A549 (cell line): ENCODE measurements at regions of chr12 and their contacts with region 1.

Region 1: GRCh38 chr12:114684098-114684869 is at the start of gene TBX3:
- DNase-seq: peak; percentile 97 to 100
- ATAC-seq: peak; percentile 88 to 92
- H3K4me3 ChIP-seq: peak within 1 kb of the TSS; percentile 57
- H3K27ac ChIP-seq: peak within 1 kb of the TSS; percentile 96 to 100
- H3K4me1 ChIP-seq: peaks cover 15% of the 10 kb centered on the region
- CTCF ChIP-seq: peak; percentile 58
- EP300 ChIP-seq: no peak
- POLR2A ChIP-seq: peak; percentile 91
- RAD21 ChIP-seq: peak; percentile 50 to 77
- polyA plus RNA-seq, gene TBX3: 23.7 and 28.0 TPM in 2 replicates

Region 2: GRCh38 chr12:114425031-114425626 is 259.2 kb before region 1 on chr12:
- CTCF ChIA-PET with region 1: no interaction called
- POLR2A ChIA-PET with region 1: no interaction called
- DNase-seq: no peak
- ATAC-seq: no peak; a peak in 1 of 6 replicates
- H3K4me3 ChIP-seq: no peak overlapping the region
- H3K27ac ChIP-seq: no peak overlapping the region
- H3K4me1 ChIP-seq: no peaks in the 10 kb centered on the region
- CTCF ChIP-seq: no peak
- EP300 ChIP-seq: no peak
- POLR2A ChIP-seq: no peak
- RAD21 ChIP-seq: no peak

Region 3: GRCh38 chr12:114588091-114588490 is 96.2 kb before region 1 on chr12:
- CTCF ChIA-PET with region 1: no interaction called
- POLR2A ChIA-PET with region 1: no interaction called
- DNase-seq: no peak
- ATAC-seq: no peak
- H3K4me3 ChIP-seq: no peak overlapping the region
- H3K27ac ChIP-seq: no peak overlapping the region
- H3K4me1 ChIP-seq: no peaks in the 10 kb centered on the region
- CTCF ChIP-seq: no peak
- EP300 ChIP-seq: no peak
- POLR2A ChIP-seq: no peak
- RAD21 ChIP-seq: no peak

Region 4: GRCh38 chr12:114655934-114656749 is 28.1 kb before region 1 on chr12:
- CTCF ChIA-PET with region 1: interaction called, 4 read pairs
- POLR2A ChIA-PET with region 1: interaction called, 14 read pairs
- DNase-seq: peak; percentile 71 to 95
- ATAC-seq: peak; percentile 92 to 94
- H3K4me3 ChIP-seq: no peak overlapping the region
- H3K27ac ChIP-seq: peak overlapping the region; percentile 83 to 85
- H3K4me1 ChIP-seq: peaks cover 38% of the 10 kb centered on the region
- CTCF ChIP-seq: no peak
- EP300 ChIP-seq: peak; percentile 96 to 99
- POLR2A ChIP-seq: no peak
- RAD21 ChIP-seq: peak in 1 of 2 experiments; percentile 37; a peak in 3 of 5 replicates

Region 5: GRCh38 chr12:114694436-114695304 is 10.4 kb after region 1 on chr12:
- CTCF ChIA-PET with region 1: interaction called, 8 read pairs
- POLR2A ChIA-PET with region 1: interaction called, 15 read pairs
- DNase-seq: no peak
- ATAC-seq: no peak; a peak in 1 of 6 replicates
- H3K4me3 ChIP-seq: no peak overlapping the region
- H3K27ac ChIP-seq: no peak overlapping the region
- H3K4me1 ChIP-seq: no peaks in the 10 kb centered on the region
- CTCF ChIP-seq: no peak
- EP300 ChIP-seq: no peak
- POLR2A ChIP-seq: no peak
- RAD21 ChIP-seq: no peak

Region 6: DNA sequence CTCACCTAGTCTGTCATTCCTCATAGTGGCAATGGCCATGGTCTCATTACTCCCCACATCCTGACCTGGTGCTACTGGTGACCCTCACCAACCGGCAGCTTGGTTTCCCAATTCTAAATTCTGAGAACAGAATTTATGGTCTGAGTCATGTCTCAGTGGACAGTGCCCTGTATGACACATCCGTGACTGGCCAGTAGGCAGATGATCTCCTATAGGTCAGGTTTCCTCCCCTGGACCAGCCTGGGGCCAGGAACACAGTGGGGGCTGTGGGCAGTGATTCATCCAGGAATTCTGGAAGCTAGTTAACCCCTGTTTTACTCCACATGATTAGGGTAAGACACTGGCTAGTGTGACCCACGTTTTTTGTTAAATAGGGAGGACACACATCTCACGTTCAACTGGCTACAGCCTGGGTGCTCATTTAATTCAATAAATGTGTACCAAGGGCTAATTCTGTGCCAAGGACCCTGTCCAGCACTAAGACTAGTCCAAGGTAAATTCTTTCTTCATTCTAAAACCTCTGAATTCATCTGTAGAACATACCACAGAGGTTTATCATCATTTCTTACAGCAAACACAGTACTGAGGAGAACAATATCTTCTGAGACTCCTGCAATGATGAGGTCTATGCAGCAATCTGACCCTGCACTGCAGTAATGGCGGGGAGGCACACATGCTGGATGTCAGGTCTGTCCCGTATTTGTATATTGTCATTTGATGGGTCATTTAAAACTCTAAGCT is 249.3 kb after region 1 on chr12:
- CTCF ChIA-PET with region 1: interaction called, 8 read pairs
- POLR2A ChIA-PET with region 1: interaction called, 40 read pairs
- DNase-seq: peak; percentile 90 to 94
- ATAC-seq: peak; percentile 99 to 100
- H3K4me3 ChIP-seq: no peak overlapping the region
- H3K27ac ChIP-seq: peak overlapping the region; percentile 73 to 93
- H3K4me1 ChIP-seq: peaks cover 25% of the 10 kb centered on the region
- CTCF ChIP-seq: no peak
- EP300 ChIP-seq: peak; percentile 85 to 88; a peak in 4 of 5 replicates
- POLR2A ChIP-seq: no peak
- RAD21 ChIP-seq: peak; percentile 36 to 60

Region 7: GRCh38 chr12:115294439-115295133 is 610.3 kb after region 1 on chr12:
- CTCF ChIA-PET with region 1: interaction called, 3 read pairs
- POLR2A ChIA-PET with region 1: interaction called, 21 read pairs
- DNase-seq: peak in 1 of 2 experiments; percentile 84
- ATAC-seq: peak; percentile 67 to 86
- H3K4me3 ChIP-seq: no peak overlapping the region
- H3K27ac ChIP-seq: peak overlapping the region; percentile 56 to 60; a peak in 5 of 6 replicates
- H3K4me1 ChIP-seq: peaks cover 31% of the 10 kb centered on the region
- CTCF ChIP-seq: no peak
- EP300 ChIP-seq: peak; percentile 14 to 44; a peak in 1 of 5 replicates
- POLR2A ChIP-seq: no peak
- RAD21 ChIP-seq: peak in 1 of 2 experiments; percentile 14; a peak in 1 of 5 replicates

Region 8: GRCh38 chr12:115398311-115398781 is 714.1 kb after region 1 on chr12:
- CTCF ChIA-PET with region 1: interaction called, 8 read pairs
- POLR2A ChIA-PET with region 1: interaction called, 13 read pairs
- DNase-seq: peak; percentile 49 to 85
- ATAC-seq: peak; percentile 87 to 93
- H3K4me3 ChIP-seq: no peak overlapping the region
- H3K27ac ChIP-seq: peak overlapping the region; percentile 42 to 55; a peak in 3 of 6 replicates
- H3K4me1 ChIP-seq: peaks cover 23% of the 10 kb centered on the region; the same call in 2 of the 3 replicates
- CTCF ChIP-seq: peak; percentile 58
- EP300 ChIP-seq: no peak
- POLR2A ChIP-seq: no peak
- RAD21 ChIP-seq: peak; percentile 89 to 91